ENCODE measurements at regions of chr2 and their contacts with region 1.

Region 1: GRCh38 chr2:39728941-39729351 is 50.1 kb downstream of the THUMPD2 start:
- DNase-seq: peak; percentile 46
- H3K4me3 ChIP-seq: no peak overlapping the region; a peak in 1 of 4 replicates
- H3K27ac ChIP-seq: peak overlapping the region in 1 of 2 experiments; percentile 36; a peak in 1 of 4 replicates
- H3K4me1 ChIP-seq: peaks cover 0 to 10% of the 10 kb centered on the region in 2 experiments; a peak in 1 of 4 replicates
- H3K27me3 ChIP-seq: no peaks in the 10 kb centered on the region
- CTCF ChIP-seq: peak; percentile 88
- EP300 ChIP-seq: no peak
- RAD21 ChIP-seq: peak; percentile 62

Region 2: GRCh38 chr2:39696838-39697237 is 32.1 kb before region 1 on chr2:
- CTCF ChIA-PET with region 1: interaction called, 13 read pairs
- POLR2A ChIA-PET with region 1: no interaction called
- DNase-seq: peak; percentile 28
- H3K4me3 ChIP-seq: no peak overlapping the region
- H3K27ac ChIP-seq: no peak overlapping the region
- H3K4me1 ChIP-seq: peaks cover 0 to 6% of the 10 kb centered on the region in 2 experiments; a peak in 1 of 4 replicates
- H3K27me3 ChIP-seq: no peaks in the 10 kb centered on the region
- CTCF ChIP-seq: peak; percentile 68
- EP300 ChIP-seq: no peak
- RAD21 ChIP-seq: peak; percentile 79

Region 3: GRCh38 chr2:39705638-39706037 is 23.3 kb before region 1 on chr2:
- CTCF ChIA-PET with region 1: interaction called, 88 read pairs
- POLR2A ChIA-PET with region 1: no interaction called
- DNase-seq: no peak
- H3K4me3 ChIP-seq: no peak overlapping the region
- H3K27ac ChIP-seq: no peak overlapping the region
- H3K4me1 ChIP-seq: peaks cover 0 to 7% of the 10 kb centered on the region in 2 experiments; a peak in 2 of 4 replicates
- H3K27me3 ChIP-seq: no peaks in the 10 kb centered on the region
- CTCF ChIP-seq: no peak
- EP300 ChIP-seq: no peak
- RAD21 ChIP-seq: no peak

Region 4: DNA sequence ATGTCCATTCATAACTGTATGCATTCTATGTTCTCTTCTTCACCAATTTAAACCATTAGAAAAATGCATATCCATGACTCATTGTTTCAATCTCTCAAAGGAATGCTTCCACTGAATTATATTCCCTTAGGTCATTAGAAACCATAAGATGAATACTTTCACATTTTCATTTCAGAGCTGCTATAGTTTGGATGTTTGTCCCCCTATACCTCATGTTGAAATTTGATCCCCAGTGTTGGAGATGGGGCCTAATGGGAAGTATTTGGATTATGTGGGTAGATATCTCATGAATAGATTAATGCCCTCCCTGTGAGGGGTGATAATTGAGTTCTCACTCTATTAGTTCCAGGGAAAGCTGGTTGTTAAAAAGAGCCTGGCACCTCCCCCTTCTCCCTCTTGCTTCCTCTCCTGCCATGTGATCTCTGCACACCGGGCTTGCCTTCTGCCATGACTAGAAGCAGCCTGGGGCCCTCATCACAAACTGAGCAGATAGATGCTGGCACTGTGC is 14.4 kb after region 1 on chr2:
- CTCF ChIA-PET with region 1: interaction called, 27 read pairs
- POLR2A ChIA-PET with region 1: no interaction called
- DNase-seq: no peak
- H3K4me3 ChIP-seq: no peak overlapping the region
- H3K27ac ChIP-seq: peak overlapping the region in 1 of 2 experiments; percentile 73; a peak in 2 of 4 replicates
- H3K4me1 ChIP-seq: peaks cover 4 to 21% of the 10 kb centered on the region in 2 experiments
- H3K27me3 ChIP-seq: no peaks in the 10 kb centered on the region
- CTCF ChIP-seq: no peak
- EP300 ChIP-seq: no peak
- RAD21 ChIP-seq: no peak

Region 5: GRCh38 chr2:39755466-39755865 is 26.5 kb after region 1 on chr2:
- CTCF ChIA-PET with region 1: interaction called, 10 read pairs
- POLR2A ChIA-PET with region 1: no interaction called
- DNase-seq: no peak
- H3K4me3 ChIP-seq: no peak overlapping the region
- H3K27ac ChIP-seq: no peak overlapping the region; a peak in 1 of 4 replicates
- H3K4me1 ChIP-seq: no peaks in the 10 kb centered on the region; a peak in 1 of 4 replicates
- H3K27me3 ChIP-seq: no peaks in the 10 kb centered on the region
- CTCF ChIP-seq: no peak
- EP300 ChIP-seq: no peak
- RAD21 ChIP-seq: no peak

Region 6: DNA sequence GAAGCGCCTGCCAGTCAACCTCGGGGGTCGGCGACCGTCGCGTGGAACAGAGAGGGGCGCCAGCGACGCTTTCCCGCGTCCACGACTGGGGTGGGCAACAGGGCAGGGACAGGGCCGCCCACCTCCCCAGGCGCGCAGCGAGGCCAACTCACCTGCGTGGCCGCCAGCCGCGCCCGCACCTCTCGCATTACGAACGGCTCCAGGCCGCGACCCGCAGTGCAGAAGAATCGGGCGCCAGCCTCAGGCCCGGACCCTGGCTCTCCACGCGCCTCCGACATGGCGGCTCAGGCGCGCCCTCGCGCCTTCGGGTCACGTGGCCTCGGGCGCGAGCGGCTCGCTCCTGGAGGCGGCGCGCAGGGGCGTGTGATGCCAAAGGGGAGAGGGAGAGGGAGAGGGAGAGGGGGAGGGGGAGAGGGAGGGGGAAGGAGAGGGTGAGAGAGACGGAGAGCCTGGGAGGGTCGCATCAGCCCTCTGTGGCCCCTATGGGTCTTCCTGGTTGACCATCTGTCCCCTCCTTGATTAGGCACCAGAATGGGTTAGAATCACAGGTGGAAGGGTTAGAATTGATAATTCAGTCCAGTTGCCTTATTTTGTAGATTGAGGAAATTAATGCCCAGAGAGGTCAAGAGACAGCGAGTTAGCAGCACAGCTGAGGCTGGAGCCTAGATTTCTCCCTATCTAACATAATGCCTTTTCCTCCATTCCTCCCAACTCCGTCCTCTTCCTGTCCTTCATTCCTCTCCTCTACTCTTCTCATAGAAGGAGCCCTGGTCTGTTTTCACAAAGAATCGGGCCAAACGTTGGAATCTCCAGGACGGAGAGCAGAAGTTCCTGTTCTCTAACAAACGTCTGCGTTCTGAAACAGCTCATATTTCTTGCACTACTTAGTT is 50.3 kb after region 1 on chr2 and contains the start of gene THUMPD2:
- CTCF ChIA-PET with region 1: interaction called, 10 read pairs
- POLR2A ChIA-PET with region 1: no interaction called
- DNase-seq: peak; percentile 95
- H3K4me3 ChIP-seq: peak within 1 kb of the TSS; percentile 73 to 85
- H3K27ac ChIP-seq: peak within 1 kb of the TSS; percentile 51 to 86
- H3K4me1 ChIP-seq: peaks cover 0 to 11% of the 10 kb centered on the region in 2 experiments; a peak in 3 of 4 replicates
- H3K27me3 ChIP-seq: no peaks in the 10 kb centered on the region
- CTCF ChIP-seq: no peak
- EP300 ChIP-seq: no peak
- RAD21 ChIP-seq: no peak
- polyA plus RNA-seq, gene THUMPD2: 5.3 and 6.5 TPM in 2 replicates

Measured in SK-N-SH (cell line).